Motor neuron (in vitro differentiated cells): ENCODE measurements at regions of chr11 and their contacts with region 1.

Region 1: DNA sequence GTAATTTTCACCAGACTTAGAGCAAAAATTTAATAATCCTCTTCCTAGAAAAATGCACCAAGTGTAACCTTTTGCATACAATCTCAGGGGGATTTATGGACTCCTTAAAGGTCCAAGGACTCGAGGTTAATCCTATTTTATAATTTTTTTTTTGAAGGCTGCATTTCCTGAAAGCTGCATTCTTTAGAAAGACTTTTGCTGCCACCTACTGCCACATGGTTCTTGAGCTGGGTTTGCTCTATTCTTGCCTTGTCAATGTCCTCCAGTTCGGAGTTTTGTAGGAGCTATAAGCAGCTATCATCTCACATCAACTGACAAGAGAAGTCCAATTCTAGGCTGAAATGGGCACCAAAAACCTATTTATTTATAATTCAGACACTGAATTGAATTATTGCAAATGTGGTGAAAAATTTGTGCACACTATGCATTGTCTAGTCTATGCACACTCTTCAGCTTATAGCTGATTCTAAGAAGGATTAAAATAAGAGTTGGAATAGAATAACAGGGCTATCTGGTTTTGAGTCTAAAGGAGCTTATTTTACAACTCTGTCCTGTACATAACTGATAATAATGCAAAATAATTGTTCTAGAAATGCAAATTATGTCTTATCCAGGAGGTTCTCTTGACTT is 31.3 kb downstream of the TRAF6 start:
- ATAC-seq: peak; percentile 56 to 79 (median 76)
- H3K4me3 ChIP-seq: no peak overlapping the region
- H3K27ac ChIP-seq: no peak overlapping the region
- H3K4me1 ChIP-seq: no peaks in the 10 kb centered on the region

Region 2: GRCh38 chr11:36289226-36289852 is 189.5 kb before region 1 on chr11 and contains the start of gene COMMD9:
- in situ Hi-C with region 1: loop called in 2 of 9 experiments (anchors 10 to 25 kb)
- ATAC-seq: peak; percentile 92 to 99 (median 98)
- H3K4me3 ChIP-seq: peak within 1 kb of the TSS; percentile 47 to 73 (median 60)
- H3K27ac ChIP-seq: peak within 1 kb of the TSS; percentile 63 to 78
- H3K4me1 ChIP-seq: peaks cover 5% of the 10 kb centered on the region in 2 donors
- total RNA-seq, gene COMMD9: 26.4 to 66.8 (median 43.7) TPM